IMR-90 (cell line): ENCODE measurements at regions of chr11 and their contacts with region 1.

Region 1: DNA sequence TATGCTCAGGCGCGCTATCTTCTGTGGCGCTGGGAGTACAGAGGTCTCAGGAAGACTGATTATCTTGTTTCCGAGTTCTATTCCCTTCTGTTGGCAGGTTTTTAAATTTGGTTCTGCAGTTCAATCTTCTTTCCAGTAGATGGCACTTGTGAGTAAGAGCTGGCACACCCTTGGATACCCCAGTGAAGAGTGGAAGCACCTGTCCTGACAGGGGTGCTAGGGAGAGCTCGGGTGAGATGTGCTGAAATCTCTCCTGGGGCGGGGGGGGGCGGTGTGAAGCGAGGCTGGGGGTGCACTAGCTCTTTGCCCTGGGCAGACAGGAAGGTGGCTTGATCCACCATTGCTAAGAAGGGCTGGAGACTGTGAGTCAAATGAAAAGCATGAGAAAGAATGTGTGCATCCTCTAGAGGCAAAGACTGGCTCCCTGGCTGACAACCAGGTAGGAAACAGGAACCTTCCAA is 679.9 kb upstream of the CCDC179 start:
- DNase-seq: peak; percentile 53
- ATAC-seq: peak; percentile 91
- H3K4me3 ChIP-seq: no peak overlapping the region
- H3K27ac ChIP-seq: peak overlapping the region; percentile 62; the same call in 1 of the 2 replicates
- H3K4me1 ChIP-seq: peaks cover 6% of the 10 kb centered on the region; the same call in 1 of the 2 replicates
- H3K27me3 ChIP-seq: no peaks in the 10 kb centered on the region
- CTCF ChIP-seq: peak; percentile 75
- POLR2A ChIP-seq: no peak
- RAD21 ChIP-seq: peak; percentile 76

Region 2: DNA sequence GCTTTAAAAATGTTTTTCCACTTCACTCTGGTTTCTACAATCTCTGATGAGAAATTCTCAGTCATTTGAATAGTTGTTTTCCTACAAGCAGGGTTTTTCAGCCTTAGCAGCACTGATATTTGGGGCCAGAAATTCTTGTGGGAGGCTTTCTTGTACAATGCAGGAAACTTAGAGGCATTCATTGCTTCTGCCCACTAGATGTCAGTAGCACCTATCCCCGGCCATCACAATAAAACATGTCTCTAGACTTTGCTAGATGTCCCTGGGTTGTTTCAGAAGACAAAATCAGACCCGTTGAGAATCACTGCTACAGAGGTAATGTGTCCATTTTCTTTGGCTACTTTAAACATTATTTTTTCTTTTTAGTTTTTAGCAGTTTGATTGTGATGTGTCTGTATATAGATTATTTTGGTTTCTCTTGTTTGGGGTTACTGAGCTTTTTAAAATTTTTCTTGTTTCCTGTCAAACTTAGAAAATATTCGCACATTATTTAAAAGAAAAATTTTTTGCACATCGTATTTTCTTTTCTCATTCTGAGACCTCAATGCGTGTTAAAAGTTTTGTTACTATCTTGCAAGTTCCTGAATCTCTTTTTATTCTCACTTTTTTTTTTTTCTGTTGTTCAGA is 619.1 kb before region 1 on chr11:
- CTCF ChIA-PET with region 1: no interaction called
- POLR2A ChIA-PET with region 1: no interaction called
- dilution Hi-C with region 1: no loop called
- in situ Hi-C with region 1: no loop called
- intact Hi-C with region 1: loop called (anchors 5 kb)
- DNase-seq: peak; percentile 76
- ATAC-seq: peak; percentile 95
- H3K4me3 ChIP-seq: no peak overlapping the region
- H3K27ac ChIP-seq: no peak overlapping the region
- H3K4me1 ChIP-seq: peaks cover 2% of the 10 kb centered on the region; the same call in 1 of the 2 replicates
- H3K27me3 ChIP-seq: no peaks in the 10 kb centered on the region
- CTCF ChIP-seq: peak; percentile 79
- POLR2A ChIP-seq: no peak
- RAD21 ChIP-seq: peak; percentile 76

Region 3: GRCh38 chr11:23112987-23113886 is 426.9 kb before region 1 on chr11:
- CTCF ChIA-PET with region 1: interaction called, 4 read pairs
- POLR2A ChIA-PET with region 1: no interaction called
- dilution Hi-C with region 1: no loop called
- in situ Hi-C with region 1: no loop called
- intact Hi-C with region 1: loop called (anchors 2 kb)
- DNase-seq: peak; percentile 63
- ATAC-seq: peak; percentile 70
- H3K4me3 ChIP-seq: no peak overlapping the region
- H3K27ac ChIP-seq: peak overlapping the region; percentile 75; the same call in 1 of the 2 replicates
- H3K4me1 ChIP-seq: peaks cover 9% of the 10 kb centered on the region
- H3K27me3 ChIP-seq: no peaks in the 10 kb centered on the region
- CTCF ChIP-seq: peak; percentile 80
- POLR2A ChIP-seq: no peak
- RAD21 ChIP-seq: peak; percentile 90

Region 4: DNA sequence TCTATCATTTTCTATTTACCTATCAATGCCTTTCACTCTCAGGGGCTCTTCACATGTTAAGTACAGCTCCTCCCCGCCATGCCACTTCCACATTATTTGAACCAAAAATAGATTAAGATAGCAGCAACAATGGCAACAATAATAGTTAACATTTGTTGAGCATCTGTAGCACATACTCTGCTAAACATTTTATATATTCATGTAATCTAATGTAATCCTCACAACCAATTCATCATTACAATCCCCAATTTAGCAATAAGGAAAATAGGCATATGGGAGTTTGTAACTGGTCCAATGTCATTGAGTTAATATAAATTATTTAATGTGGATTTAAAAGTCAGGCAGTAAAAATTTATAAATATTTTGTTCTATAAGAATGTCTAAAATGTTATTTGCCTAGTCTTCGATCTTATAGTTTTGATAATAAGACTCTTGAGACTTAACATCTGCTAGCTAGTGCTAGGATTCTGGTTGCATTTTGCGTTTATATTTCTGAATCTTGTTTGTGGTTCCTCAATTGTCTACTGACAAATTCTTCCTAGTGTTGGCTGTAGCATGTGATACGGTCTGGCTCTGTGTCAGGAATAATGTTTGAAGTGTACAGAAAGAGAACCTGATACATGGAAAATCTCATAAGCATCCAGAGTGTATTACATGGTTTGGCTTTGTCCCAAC is 335.2 kb after region 1 on chr11:
- CTCF ChIA-PET with region 1: no interaction called
- POLR2A ChIA-PET with region 1: no interaction called
- dilution Hi-C with region 1: no loop called
- in situ Hi-C with region 1: no loop called
- intact Hi-C with region 1: loop called (anchors 10 kb)
- DNase-seq: peak; percentile 81
- ATAC-seq: peak; percentile 70
- H3K4me3 ChIP-seq: no peak overlapping the region
- H3K27ac ChIP-seq: peak overlapping the region; percentile 100; the same call in 1 of the 2 replicates
- H3K4me1 ChIP-seq: peaks cover 9% of the 10 kb centered on the region
- H3K27me3 ChIP-seq: no peaks in the 10 kb centered on the region
- CTCF ChIP-seq: no peak
- POLR2A ChIP-seq: no peak
- RAD21 ChIP-seq: no peak

Region 5: GRCh38 chr11:24078018-24078417 is 537.9 kb after region 1 on chr11:
- CTCF ChIA-PET with region 1: no interaction called
- POLR2A ChIA-PET with region 1: no interaction called
- dilution Hi-C with region 1: no loop called
- in situ Hi-C with region 1: no loop called
- intact Hi-C with region 1: loop called (anchors 2 kb)
- DNase-seq: peak; percentile 87
- ATAC-seq: peak; percentile 88
- H3K4me3 ChIP-seq: no peak overlapping the region
- H3K27ac ChIP-seq: peak overlapping the region; percentile 99; the same call in 1 of the 2 replicates
- H3K4me1 ChIP-seq: peaks cover 14% of the 10 kb centered on the region
- H3K27me3 ChIP-seq: no peaks in the 10 kb centered on the region
- CTCF ChIP-seq: no peak
- POLR2A ChIP-seq: no peak
- RAD21 ChIP-seq: no peak

Region 6: DNA sequence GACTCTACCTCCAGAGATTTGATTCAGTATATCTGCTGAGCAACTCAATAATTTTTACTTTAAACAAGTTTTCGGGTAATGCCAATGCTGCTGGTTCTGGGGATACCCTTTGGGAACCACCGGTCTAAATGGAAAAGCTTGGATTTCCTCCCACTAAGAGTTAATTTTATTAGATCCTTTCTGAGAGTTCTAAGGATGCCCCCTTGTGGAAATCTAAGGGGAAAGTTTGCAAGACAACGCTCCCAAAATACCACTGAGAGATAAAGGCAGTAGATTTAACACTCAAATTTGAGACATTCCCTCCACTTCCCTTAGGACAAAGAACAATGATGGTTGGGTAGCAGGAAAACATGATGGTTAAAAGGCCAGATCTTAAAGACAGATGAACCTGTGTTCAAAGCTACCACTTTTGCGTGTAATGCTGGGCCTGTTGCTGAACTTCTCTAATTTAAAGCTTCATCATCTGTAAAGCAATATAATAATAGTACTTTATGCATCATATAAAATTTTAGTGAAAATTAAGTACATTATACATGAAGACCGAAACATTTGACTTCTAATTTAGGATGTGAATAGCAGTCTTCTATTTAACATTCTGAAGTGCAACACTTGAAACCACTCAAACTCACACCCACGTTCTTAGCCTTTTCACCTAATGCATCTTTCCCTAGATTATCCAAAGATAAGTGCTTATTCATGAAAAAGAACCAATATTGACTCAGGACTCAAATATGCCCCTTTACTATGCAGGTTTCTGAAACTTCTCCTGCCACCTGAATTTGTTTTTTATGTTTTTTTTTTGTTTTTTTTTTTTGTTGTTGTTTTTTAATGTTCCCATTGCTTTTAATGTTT is 846.6 kb after region 1 on chr11:
- CTCF ChIA-PET with region 1: interaction called, 3 read pairs
- POLR2A ChIA-PET with region 1: no interaction called
- dilution Hi-C with region 1: no loop called
- in situ Hi-C with region 1: loop called (anchors 10 kb)
- intact Hi-C with region 1: loop called (anchors 1 kb)
- DNase-seq: peak; percentile 68
- ATAC-seq: peak; percentile 75
- H3K4me3 ChIP-seq: no peak overlapping the region
- H3K27ac ChIP-seq: peak overlapping the region; percentile 22; the same call in 1 of the 2 replicates
- H3K4me1 ChIP-seq: peaks cover 3% of the 10 kb centered on the region; the same call in 1 of the 2 replicates
- H3K27me3 ChIP-seq: no peaks in the 10 kb centered on the region
- CTCF ChIP-seq: peak; percentile 71
- POLR2A ChIP-seq: no peak
- RAD21 ChIP-seq: peak; percentile 71